Activated B cell treated with CpG ODN at 0.5 μM for 24 hours (primary cell): ENCODE measurements at regions of chr12 and their contacts with region 1.

Region 1: DNA sequence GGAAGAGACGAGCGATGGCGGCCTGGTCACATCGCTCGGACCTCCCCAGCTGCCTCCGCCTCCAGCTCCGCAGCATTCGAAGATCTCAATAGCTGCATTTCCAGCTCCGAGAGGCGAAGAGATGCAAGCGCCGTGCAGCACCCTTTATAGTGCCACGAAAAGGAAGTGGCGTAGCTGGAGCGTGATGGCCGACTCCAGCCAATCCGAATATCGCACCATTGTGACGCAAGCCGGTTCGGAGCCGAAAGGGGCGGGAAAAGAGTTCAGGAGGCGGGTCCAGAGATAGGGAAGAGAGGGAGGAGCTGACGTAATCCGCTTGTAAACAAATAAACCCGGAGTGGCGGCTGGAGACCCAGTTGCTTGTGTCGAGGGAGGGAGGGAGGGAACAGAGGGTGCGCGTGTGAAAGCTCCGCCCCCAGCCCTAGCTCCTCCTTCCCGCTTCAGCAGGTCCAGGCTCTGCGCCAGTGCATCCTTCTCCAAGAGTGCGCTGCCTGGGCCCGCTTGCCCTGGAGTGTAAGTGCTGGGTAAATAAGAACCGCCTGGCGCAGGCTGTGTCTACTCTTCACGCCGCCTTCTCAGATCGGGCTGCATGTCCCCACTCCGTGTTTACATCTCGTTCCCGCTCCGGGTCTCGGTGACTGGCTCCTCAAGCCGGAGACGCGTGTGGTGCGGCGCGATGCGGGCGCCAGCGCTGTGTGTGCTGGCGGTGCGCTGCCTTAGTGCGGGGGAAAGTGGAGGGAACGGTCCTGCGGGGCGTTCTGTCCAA is at the start of gene BTG1:
- DNase-seq: peak; percentile 89
- ATAC-seq: peak; percentile 75
- H3K4me3 Mint-ChIP-seq: peak within 1 kb of the TSS; percentile 98
- H3K27ac Mint-ChIP-seq: peak within 1 kb of the TSS; percentile 99
- H3K4me1 Mint-ChIP-seq: peaks cover 39% of the 10 kb centered on the region
- H3K27me3 Mint-ChIP-seq: no peaks in the 10 kb centered on the region
- CTCF ChIP-seq: no peak
- total RNA-seq, gene BTG1: 423 and 429 TPM in 2 replicates

Region 2: DNA sequence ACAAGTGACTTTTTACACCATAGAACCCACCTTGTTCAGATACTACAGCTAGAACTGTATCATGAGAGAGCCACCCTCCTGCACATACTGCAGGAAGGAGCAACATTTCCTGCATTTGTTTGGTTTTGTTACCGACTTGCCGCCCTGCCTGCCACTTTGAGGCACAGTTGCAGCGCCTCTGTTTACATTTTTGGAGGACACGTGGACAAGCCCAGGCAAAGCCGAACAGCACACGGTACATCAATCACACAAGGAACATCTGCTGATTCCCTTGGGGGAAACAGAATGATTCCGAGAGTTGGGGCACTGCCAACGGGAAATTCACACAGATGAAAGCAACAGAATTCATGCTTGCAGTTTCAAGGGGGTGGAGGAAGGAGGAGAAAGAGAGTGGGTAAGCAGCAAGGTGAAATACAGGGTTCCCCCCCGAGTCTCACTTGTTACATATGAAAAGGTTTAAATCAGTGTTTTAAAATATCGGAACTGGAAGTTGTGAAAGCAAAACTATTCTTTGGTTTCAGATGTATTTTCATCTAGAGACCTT is 111.0 kb before region 1 on chr12:
- CTCF ChIA-PET with region 1: no interaction called
- POLR2A ChIA-PET with region 1: interaction called, 12 read pairs
- intact Hi-C with region 1: loop called (anchors 1 kb)
- DNase-seq: peak; percentile 50
- ATAC-seq: peak; percentile 91
- H3K4me3 Mint-ChIP-seq: peak overlapping the region; percentile 67
- H3K27ac Mint-ChIP-seq: peak overlapping the region; percentile 86
- H3K4me1 Mint-ChIP-seq: peaks cover 65% of the 10 kb centered on the region
- H3K27me3 Mint-ChIP-seq: no peaks in the 10 kb centered on the region
- CTCF ChIP-seq: no peak

Region 3: GRCh38 chr12:92085040-92085735 is 60.7 kb before region 1 on chr12:
- CTCF ChIA-PET with region 1: no interaction called
- POLR2A ChIA-PET with region 1: no interaction called
- intact Hi-C with region 1: no loop called
- DNase-seq: no peak
- ATAC-seq: no peak
- H3K4me3 Mint-ChIP-seq: no peak overlapping the region
- H3K27ac Mint-ChIP-seq: no peak overlapping the region
- H3K4me1 Mint-ChIP-seq: peaks cover 22% of the 10 kb centered on the region
- H3K27me3 Mint-ChIP-seq: no peaks in the 10 kb centered on the region
- CTCF ChIP-seq: no peak

Region 4: GRCh38 chr12:92208613-92209121 is 62.8 kb after region 1 on chr12:
- CTCF ChIA-PET with region 1: interaction called, 3 read pairs
- POLR2A ChIA-PET with region 1: interaction called, 75 read pairs
- intact Hi-C with region 1: loop called (anchors 2 kb)
- DNase-seq: no peak
- ATAC-seq: peak; percentile 84
- H3K4me3 Mint-ChIP-seq: peak overlapping the region; percentile 61
- H3K27ac Mint-ChIP-seq: peak overlapping the region; percentile 70
- H3K4me1 Mint-ChIP-seq: peaks cover 28% of the 10 kb centered on the region
- H3K27me3 Mint-ChIP-seq: no peaks in the 10 kb centered on the region
- CTCF ChIP-seq: no peak

Region 5: GRCh38 chr12:92312463-92312964 is 166.6 kb after region 1 on chr12:
- CTCF ChIA-PET with region 1: no interaction called
- POLR2A ChIA-PET with region 1: no interaction called
- intact Hi-C with region 1: no loop called
- DNase-seq: no peak
- ATAC-seq: no peak
- H3K4me3 Mint-ChIP-seq: no peak overlapping the region
- H3K27ac Mint-ChIP-seq: no peak overlapping the region
- H3K4me1 Mint-ChIP-seq: peaks cover 2% of the 10 kb centered on the region
- H3K27me3 Mint-ChIP-seq: no peaks in the 10 kb centered on the region
- CTCF ChIP-seq: no peak

Region 6: GRCh38 chr12:92363295-92364146 is 217.6 kb after region 1 on chr12:
- CTCF ChIA-PET with region 1: interaction called, 13 read pairs
- POLR2A ChIA-PET with region 1: interaction called, 344 read pairs
- intact Hi-C with region 1: loop called (anchors 1 kb)
- DNase-seq: peak; percentile 50
- ATAC-seq: peak; percentile 75
- H3K4me3 Mint-ChIP-seq: peak overlapping the region; percentile 88
- H3K27ac Mint-ChIP-seq: peak overlapping the region; percentile 98
- H3K4me1 Mint-ChIP-seq: peaks cover 76% of the 10 kb centered on the region
- H3K27me3 Mint-ChIP-seq: no peaks in the 10 kb centered on the region
- CTCF ChIP-seq: no peak

Region 7: GRCh38 chr12:92472201-92472600 is 326.3 kb after region 1 on chr12:
- CTCF ChIA-PET with region 1: interaction called, 4 read pairs
- POLR2A ChIA-PET with region 1: interaction called, 126 read pairs
- intact Hi-C with region 1: loop called (anchors 1 kb)
- DNase-seq: no peak
- ATAC-seq: no peak
- H3K4me3 Mint-ChIP-seq: peak overlapping the region; percentile 48
- H3K27ac Mint-ChIP-seq: peak overlapping the region; percentile 96
- H3K4me1 Mint-ChIP-seq: peaks cover 90% of the 10 kb centered on the region
- H3K27me3 Mint-ChIP-seq: no peaks in the 10 kb centered on the region
- CTCF ChIP-seq: no peak

Region 8: DNA sequence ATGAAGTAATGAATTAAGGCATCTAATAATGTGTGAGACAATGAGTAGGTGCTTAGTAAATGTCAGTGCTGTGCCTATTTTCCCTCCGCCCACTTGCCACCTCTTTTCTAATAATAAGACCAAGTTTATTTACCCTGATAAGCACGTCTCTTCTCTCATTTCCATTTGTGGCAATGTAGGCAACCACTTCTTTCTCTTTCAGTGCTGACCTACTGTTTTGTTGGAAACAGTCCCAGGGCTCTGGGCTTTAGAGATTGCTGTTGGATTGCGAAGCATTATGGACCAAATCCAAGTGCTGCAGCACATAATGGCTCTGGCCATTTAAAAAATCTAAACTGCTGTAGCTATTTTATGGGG is 415.6 kb after region 1 on chr12:
- CTCF ChIA-PET with region 1: interaction called, 6 read pairs
- POLR2A ChIA-PET with region 1: interaction called, 28 read pairs
- intact Hi-C with region 1: no loop called
- DNase-seq: no peak
- ATAC-seq: no peak
- H3K4me3 Mint-ChIP-seq: no peak overlapping the region
- H3K27ac Mint-ChIP-seq: peak overlapping the region; percentile 65
- H3K4me1 Mint-ChIP-seq: peaks cover 85% of the 10 kb centered on the region
- H3K27me3 Mint-ChIP-seq: no peaks in the 10 kb centered on the region
- CTCF ChIP-seq: no peak